ENCODE measurements at regions of chr13 and their contacts with region 1.

Region 1: DNA sequence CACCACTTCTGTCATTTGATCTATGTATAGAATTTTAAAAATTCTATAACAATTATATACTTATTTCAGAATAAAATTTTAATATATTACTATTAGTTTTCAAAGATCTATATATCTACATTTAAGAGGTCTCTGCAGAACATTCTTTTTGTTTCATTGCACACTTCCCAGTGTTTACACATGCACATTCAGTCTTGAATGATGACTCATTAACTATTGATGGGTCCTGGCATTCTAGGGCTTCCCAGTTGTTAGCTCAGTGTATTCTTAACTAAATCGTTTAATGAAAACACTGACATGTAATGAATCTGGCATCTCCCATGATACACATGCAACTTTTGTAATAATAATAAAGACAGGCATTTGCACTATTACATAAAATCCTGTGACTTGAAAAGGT is 324.6 kb downstream of the KLF12 start:
- DNase-seq: no peak
- ATAC-seq: no peak
- H3K4me3 ChIP-seq: no peak overlapping the region
- H3K4me3 Mint-ChIP-seq: no peak overlapping the region
- H3K27ac ChIP-seq: no peak overlapping the region
- H3K27ac Mint-ChIP-seq: peak overlapping the region in 2 of 9 donors; percentile 31 to 71
- H3K4me1 ChIP-seq: no peaks in the 10 kb centered on the region
- H3K4me1 Mint-ChIP-seq: peaks cover 0 to 53% (median 39%) of the 10 kb centered on the region in 7 donors
- H3K27me3 ChIP-seq: no peaks in the 10 kb centered on the region
- H3K27me3 Mint-ChIP-seq: no peaks in the 10 kb centered on the region

Region 2: GRCh38 chr13:73792796-73793195 is 16.8 kb before region 1 on chr13:
- CTCF ChIA-PET with region 1: no interaction called
- POLR2A ChIA-PET with region 1: interaction called, 4 read pairs
- intact Hi-C with region 1: loop called in 1 of 2 experiments (anchors 2 kb)
- DNase-seq: no peak
- ATAC-seq: no peak
- H3K4me3 ChIP-seq: no peak overlapping the region
- H3K4me3 Mint-ChIP-seq: peak overlapping the region in 2 of 10 donors; percentile 5 to 34
- H3K27ac ChIP-seq: no peak overlapping the region
- H3K27ac Mint-ChIP-seq: peak overlapping the region in 4 of 9 donors; percentile 23 to 75 (median 52)
- H3K4me1 ChIP-seq: peaks cover 0 to 7% of the 10 kb centered on the region in 2 donors
- H3K4me1 Mint-ChIP-seq: peaks cover 0 to 70% (median 54%) of the 10 kb centered on the region in 7 donors
- H3K27me3 ChIP-seq: no peaks in the 10 kb centered on the region
- H3K27me3 Mint-ChIP-seq: no peaks in the 10 kb centered on the region

Region 3: DNA sequence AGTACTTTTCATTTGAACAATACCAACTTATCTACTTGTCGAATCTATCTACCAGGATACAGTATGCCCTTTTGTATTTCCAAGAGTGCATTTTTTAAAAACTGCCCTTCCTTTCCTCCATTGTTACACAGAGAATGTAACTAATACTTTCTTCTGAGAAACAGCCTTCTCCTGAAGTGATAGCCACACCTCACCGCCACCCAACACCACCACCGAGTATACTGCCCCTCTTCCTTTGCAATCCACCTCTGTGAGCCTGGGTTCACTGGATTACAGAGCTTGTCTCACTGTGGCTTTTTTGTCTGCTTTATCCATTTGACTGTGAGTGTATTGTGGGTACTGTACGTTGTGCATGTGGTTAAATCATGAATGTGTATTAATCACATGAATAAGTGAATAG is 19.2 kb after region 1 on chr13:
- CTCF ChIA-PET with region 1: interaction called, 4 read pairs
- POLR2A ChIA-PET with region 1: interaction called, 4 read pairs
- intact Hi-C with region 1: loop called in 1 of 2 experiments (anchors 2 kb)
- DNase-seq: no peak
- ATAC-seq: no peak
- H3K4me3 ChIP-seq: no peak overlapping the region
- H3K4me3 Mint-ChIP-seq: no peak overlapping the region
- H3K27ac ChIP-seq: no peak overlapping the region
- H3K27ac Mint-ChIP-seq: peak overlapping the region in 5 of 9 donors; percentile 29 to 83 (median 51)
- H3K4me1 ChIP-seq: peaks cover 4 to 40% of the 10 kb centered on the region in 2 donors
- H3K4me1 Mint-ChIP-seq: peaks cover 18 to 89% (median 74%) of the 10 kb centered on the region in 7 donors
- H3K27me3 ChIP-seq: no peaks in the 10 kb centered on the region
- H3K27me3 Mint-ChIP-seq: no peaks in the 10 kb centered on the region

Region 4: GRCh38 chr13:73943137-73943964 is 133.8 kb after region 1 on chr13:
- CTCF ChIA-PET with region 1: no interaction called
- POLR2A ChIA-PET with region 1: no interaction called
- intact Hi-C with region 1: no loop called
- DNase-seq: peak in 7 of 9 donors; percentile 12 to 44 (median 21)
- ATAC-seq: peak; percentile 87
- H3K4me3 ChIP-seq: peak overlapping the region; percentile 0
- H3K4me3 Mint-ChIP-seq: peak overlapping the region in 9 of 10 donors; percentile 7 to 65 (median 36)
- H3K27ac ChIP-seq: peak overlapping the region; percentile 69
- H3K27ac Mint-ChIP-seq: peak overlapping the region; percentile 45 to 91 (median 80)
- H3K4me1 ChIP-seq: peaks cover 21 to 51% of the 10 kb centered on the region in 2 donors
- H3K4me1 Mint-ChIP-seq: peaks cover 39 to 95% (median 82%) of the 10 kb centered on the region in 7 donors
- H3K27me3 ChIP-seq: no peaks in the 10 kb centered on the region
- H3K27me3 Mint-ChIP-seq: no peaks in the 10 kb centered on the region

Measured in naive thymus-derived CD4-positive, alpha-beta T cell (primary cell).